MCF 10A (cell line): ENCODE measurements at regions of chr20 and their contacts with region 1.

Region 1: GRCh38 chr20:56554869-56555268 is 21.8 kb downstream of the FAM209B start:
- DNase-seq: peak; percentile 99
- H3K4me3 Mint-ChIP-seq: peak overlapping the region; percentile 55
- H3K27ac Mint-ChIP-seq: peak overlapping the region; percentile 87
- H3K4me1 Mint-ChIP-seq: peaks cover 11% of the 10 kb centered on the region
- H3K27me3 Mint-ChIP-seq: peaks cover 10% of the 10 kb centered on the region
- CTCF ChIP-seq: no peak

Region 2: GRCh38 chr20:56540420-56540819 is 14.4 kb before region 1 on chr20:
- CTCF ChIA-PET with region 1: interaction called, 23 read pairs
- POLR2A ChIA-PET with region 1: no interaction called
- intact Hi-C with region 1: no loop called
- DNase-seq: peak; percentile 8
- H3K4me3 Mint-ChIP-seq: no peak overlapping the region
- H3K27ac Mint-ChIP-seq: no peak overlapping the region
- H3K4me1 Mint-ChIP-seq: no peaks in the 10 kb centered on the region
- H3K27me3 Mint-ChIP-seq: no peaks in the 10 kb centered on the region
- CTCF ChIP-seq: no peak

Region 3: DNA sequence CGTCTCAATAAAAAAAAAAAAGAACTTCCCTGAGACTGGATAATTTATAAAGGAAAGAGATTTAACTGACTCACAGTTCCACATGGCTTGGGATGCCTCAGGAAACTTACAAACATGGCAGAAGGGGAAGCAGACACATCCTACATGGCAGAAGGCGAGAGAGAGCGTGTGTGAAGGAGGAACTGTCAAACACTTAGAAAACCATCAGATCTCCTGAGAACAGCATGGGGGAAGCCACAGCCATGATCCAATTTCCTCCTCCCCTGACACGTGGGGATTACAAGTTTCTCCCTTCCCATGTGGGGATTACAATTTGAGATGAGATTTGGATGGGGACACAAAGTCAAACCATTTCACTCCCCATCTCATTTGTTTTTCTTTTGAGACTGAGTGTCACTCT is 27.7 kb after region 1 on chr20:
- CTCF ChIA-PET with region 1: interaction called, 301 read pairs
- POLR2A ChIA-PET with region 1: interaction called, 48 read pairs
- intact Hi-C with region 1: loop called (anchors 1 kb)
- DNase-seq: no peak
- H3K4me3 Mint-ChIP-seq: no peak overlapping the region
- H3K27ac Mint-ChIP-seq: no peak overlapping the region
- H3K4me1 Mint-ChIP-seq: no peaks in the 10 kb centered on the region
- H3K27me3 Mint-ChIP-seq: no peaks in the 10 kb centered on the region
- CTCF ChIP-seq: no peak

Region 4: GRCh38 chr20:56945059-56945458 is 390.2 kb after region 1 on chr20:
- CTCF ChIA-PET with region 1: interaction called, 12 read pairs
- POLR2A ChIA-PET with region 1: no interaction called
- intact Hi-C with region 1: loop called (anchors 1 kb)
- DNase-seq: no peak
- H3K4me3 Mint-ChIP-seq: no peak overlapping the region
- H3K27ac Mint-ChIP-seq: no peak overlapping the region
- H3K4me1 Mint-ChIP-seq: no peaks in the 10 kb centered on the region
- H3K27me3 Mint-ChIP-seq: peaks cover 29% of the 10 kb centered on the region
- CTCF ChIP-seq: no peak

Region 5: GRCh38 chr20:56995576-56996075 is 440.8 kb after region 1 on chr20:
- CTCF ChIA-PET with region 1: interaction called, 18 read pairs
- POLR2A ChIA-PET with region 1: no interaction called
- intact Hi-C with region 1: loop called (anchors 1 kb)
- DNase-seq: peak; percentile 34
- H3K4me3 Mint-ChIP-seq: no peak overlapping the region
- H3K27ac Mint-ChIP-seq: no peak overlapping the region
- H3K4me1 Mint-ChIP-seq: no peaks in the 10 kb centered on the region
- H3K27me3 Mint-ChIP-seq: no peaks in the 10 kb centered on the region
- CTCF ChIP-seq: peak; percentile 54

Region 6: DNA sequence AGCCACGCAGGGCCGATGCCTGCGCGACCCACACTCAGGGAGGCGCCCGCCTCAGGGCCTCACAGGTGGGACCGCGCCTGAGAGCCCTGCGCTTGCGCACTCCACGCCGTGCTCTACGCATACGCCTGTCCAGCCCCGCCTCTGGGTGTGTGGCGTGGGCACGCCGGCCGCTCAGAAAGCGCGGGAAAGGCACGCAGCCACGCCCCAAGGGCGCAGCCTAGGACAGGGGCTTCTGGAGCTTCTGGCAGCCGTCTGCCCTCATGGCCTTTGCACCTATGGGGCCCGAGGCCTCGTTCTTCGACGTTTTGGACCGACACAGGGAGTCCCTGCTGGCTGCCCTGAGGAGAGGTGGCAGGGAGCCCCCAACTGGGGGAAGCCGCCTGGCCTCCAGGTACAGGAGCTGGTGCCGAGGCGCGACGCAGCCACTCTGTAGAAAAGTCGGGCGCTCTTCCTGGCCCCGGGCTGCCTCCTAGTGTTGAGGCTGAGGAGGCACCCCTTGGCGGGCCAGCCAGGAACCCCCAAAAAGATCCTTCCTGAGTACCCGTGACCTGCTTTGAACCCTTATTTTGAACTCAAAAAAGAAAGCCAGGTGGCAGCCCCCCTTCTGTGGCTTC is 774.8 kb after region 1 on chr20 and contains the start of gene SPO11:
- CTCF ChIA-PET with region 1: interaction called, 11 read pairs
- POLR2A ChIA-PET with region 1: interaction called, 4 read pairs
- intact Hi-C with region 1: no loop called
- DNase-seq: no peak
- H3K4me3 Mint-ChIP-seq: no peak within 1 kb of the TSS
- H3K27ac Mint-ChIP-seq: no peak within 1 kb of the TSS
- H3K4me1 Mint-ChIP-seq: peaks cover 7% of the 10 kb centered on the region
- H3K27me3 Mint-ChIP-seq: peaks cover 18% of the 10 kb centered on the region
- CTCF ChIP-seq: peak; percentile 17
- total RNA-seq, gene SPO11: not detected in 2 replicates